Right cardiac atrium (tissue), 5 donors: ENCODE measurements at regions of chr4 and their contacts with region 1.

Region 1: GRCh38 chr4:79576429-79576753 is 168.4 kb upstream of the GK2 start:
- DNase-seq: peak in 1 of 3 donors; percentile 38
- ATAC-seq: peak; percentile 77 to 78
- H3K4me3 ChIP-seq: no peak overlapping the region
- H3K27ac ChIP-seq: no peak overlapping the region
- H3K4me1 ChIP-seq: no peaks in the 10 kb centered on the region
- H3K27me3 ChIP-seq: no peaks in the 10 kb centered on the region

Region 2: GRCh38 chr4:79042079-79042674 is 534.2 kb before region 1 on chr4:
- intact Hi-C with region 1: loop called in 2 of 4 experiments (anchors 5 kb)
- DNase-seq: no peak
- ATAC-seq: peak in 1 of 2 donors; percentile 35
- H3K4me3 ChIP-seq: no peak overlapping the region
- H3K27ac ChIP-seq: no peak overlapping the region
- H3K4me1 ChIP-seq: no peaks in the 10 kb centered on the region
- H3K27me3 ChIP-seq: no peaks in the 10 kb centered on the region

Region 3: GRCh38 chr4:79049840-79050540 is 526.4 kb before region 1 on chr4:
- intact Hi-C with region 1: loop called in 1 of 4 experiments (anchors 5 kb)
- DNase-seq: peak in 2 of 3 donors; percentile 36 to 40
- ATAC-seq: no peak
- H3K4me3 ChIP-seq: no peak overlapping the region
- H3K27ac ChIP-seq: no peak overlapping the region
- H3K4me1 ChIP-seq: peaks cover 4% of the 10 kb centered on the region
- H3K27me3 ChIP-seq: no peaks in the 10 kb centered on the region

Region 4: GRCh38 chr4:79513576-79513975 is 62.8 kb before region 1 on chr4:
- intact Hi-C with region 1: no loop called
- DNase-seq: no peak
- ATAC-seq: no peak
- H3K4me3 ChIP-seq: no peak overlapping the region
- H3K27ac ChIP-seq: no peak overlapping the region
- H3K4me1 ChIP-seq: no peaks in the 10 kb centered on the region
- H3K27me3 ChIP-seq: no peaks in the 10 kb centered on the region

Region 5: GRCh38 chr4:79964400-79965211 is 388.2 kb after region 1 on chr4:
- intact Hi-C with region 1: no loop called
- DNase-seq: peak in 2 of 3 donors; percentile 34 to 37
- ATAC-seq: peak in 1 of 2 donors; percentile 14
- H3K4me3 ChIP-seq: no peak overlapping the region
- H3K27ac ChIP-seq: no peak overlapping the region
- H3K4me1 ChIP-seq: no peaks in the 10 kb centered on the region
- H3K27me3 ChIP-seq: no peaks in the 10 kb centered on the region